ENCODE measurements at regions of chr9 and their contacts with region 1.

Region 1: DNA sequence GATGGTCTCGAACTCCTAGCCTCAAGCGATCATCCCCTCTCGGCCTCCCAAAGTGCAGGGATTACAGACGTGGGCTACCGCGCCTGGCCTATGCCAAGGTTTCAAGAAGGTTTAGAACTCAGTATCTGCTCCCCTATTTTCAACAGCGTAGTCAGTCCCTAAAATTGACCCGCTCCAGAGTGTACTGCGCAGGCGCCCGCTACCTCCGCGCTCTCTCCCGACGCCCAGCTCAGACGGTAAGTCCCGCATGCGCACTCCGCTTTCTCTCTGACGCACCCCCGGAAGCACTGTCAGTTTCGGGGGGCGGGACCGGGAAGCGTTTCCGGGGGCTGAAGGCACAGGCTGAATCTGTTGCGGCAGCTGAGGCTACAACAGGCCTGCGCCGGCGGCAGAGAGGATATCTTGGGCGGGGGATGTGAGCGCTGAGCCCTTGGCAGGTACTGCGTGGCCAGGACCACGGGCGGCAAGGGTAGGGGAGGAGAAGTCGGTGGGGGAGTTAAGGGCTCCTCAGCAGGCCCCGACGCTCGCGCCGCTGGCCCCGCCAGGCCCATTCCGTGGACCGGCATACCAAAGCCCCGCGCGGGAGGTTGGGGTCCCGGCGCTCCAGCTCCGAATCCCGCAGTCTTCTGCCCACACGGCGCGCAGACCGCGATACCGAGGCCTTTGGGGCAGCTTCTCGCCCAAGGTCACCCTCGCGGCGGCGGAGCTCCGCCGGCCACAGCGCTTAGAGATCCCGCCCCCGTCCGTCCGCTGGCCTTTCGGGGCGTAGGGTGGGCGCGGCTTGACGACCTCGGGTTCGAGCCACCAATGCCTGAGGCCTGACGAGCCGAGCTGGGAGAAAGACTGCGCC is at the start of gene ZBTB43:
- DNase-seq: peak; percentile 98
- ATAC-seq: peak; percentile 86
- H3K4me3 Mint-ChIP-seq: peak within 1 kb of the TSS; percentile 97
- H3K27ac Mint-ChIP-seq: peak within 1 kb of the TSS; percentile 98
- H3K4me1 Mint-ChIP-seq: peaks cover 28% of the 10 kb centered on the region
- H3K27me3 Mint-ChIP-seq: no peaks in the 10 kb centered on the region
- total RNA-seq, gene ZBTB43: 23.0 to 29.4 TPM

Region 2: GRCh38 chr9:126819482-126819881 is 14.6 kb after region 1 on chr9:
- POLR2A ChIA-PET with region 1: interaction called, 11 read pairs
- DNase-seq: no peak
- ATAC-seq: no peak
- H3K4me3 Mint-ChIP-seq: no peak overlapping the region
- H3K27ac Mint-ChIP-seq: no peak overlapping the region
- H3K4me1 Mint-ChIP-seq: peaks cover 13% of the 10 kb centered on the region
- H3K27me3 Mint-ChIP-seq: no peaks in the 10 kb centered on the region

Region 3: GRCh38 chr9:126860077-126860756 is 55.3 kb after region 1 on chr9 and contains the start of gene ZBTB34:
- POLR2A ChIA-PET with region 1: interaction called, 10 read pairs
- DNase-seq: peak; percentile 92
- ATAC-seq: peak; percentile 74
- H3K4me3 Mint-ChIP-seq: peak within 1 kb of the TSS; percentile 91
- H3K27ac Mint-ChIP-seq: peak within 1 kb of the TSS; percentile 89
- H3K4me1 Mint-ChIP-seq: peaks cover 27% of the 10 kb centered on the region
- H3K27me3 Mint-ChIP-seq: peaks cover 25% of the 10 kb centered on the region
- total RNA-seq, gene ZBTB34: 9.8 to 10.5 TPM